Natural killer cell (primary cell): ENCODE measurements at regions of chr2 and their contacts with region 1.

Region 1: DNA sequence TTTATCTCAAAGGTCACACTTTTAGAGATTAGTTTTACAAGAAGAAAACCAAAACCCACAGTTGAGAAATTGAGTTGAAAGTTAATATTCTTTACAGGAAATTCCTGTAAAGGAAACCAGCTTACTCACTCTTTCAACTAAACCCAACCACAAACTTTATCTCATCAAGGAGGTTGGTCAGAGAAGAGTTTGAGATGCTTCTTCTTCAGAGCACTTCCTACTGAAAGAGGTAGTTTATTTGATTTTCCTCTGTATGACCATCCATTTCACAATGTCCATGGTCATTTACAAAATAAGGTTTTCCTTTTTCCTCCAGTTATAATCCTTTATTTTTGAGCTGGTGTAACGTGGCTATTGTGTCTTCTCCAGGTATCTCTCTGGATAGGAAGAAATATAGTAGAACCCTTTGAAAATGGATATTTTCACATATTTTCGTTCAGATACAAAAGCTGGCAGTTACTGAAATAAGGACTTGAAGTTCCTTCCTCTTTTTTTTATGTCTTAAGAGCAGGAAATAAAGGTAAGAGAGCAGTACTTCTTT is 4.5 kb upstream of the IL18RAP start:
- DNase-seq: peak in 1 of 2 donors; percentile 72
- ATAC-seq: peak; percentile 60 to 83 (median 77)
- H3K4me3 ChIP-seq: peak overlapping the region; percentile 71
- H3K4me3 Mint-ChIP-seq: peak overlapping the region; percentile 97
- H3K27ac ChIP-seq: peak overlapping the region; percentile 77
- H3K27ac Mint-ChIP-seq: peak overlapping the region in 1 of 2 donors; percentile 93
- H3K4me1 ChIP-seq: peaks cover 44% of the 10 kb centered on the region
- H3K4me1 Mint-ChIP-seq: peaks cover 82 to 88% of the 10 kb centered on the region in 2 donors
- H3K27me3 ChIP-seq: no peaks in the 10 kb centered on the region
- H3K27me3 Mint-ChIP-seq: no peaks in the 10 kb centered on the region
- CTCF ChIP-seq: no peak

Region 2: GRCh38 chr2:101328474-101329007 is 1090.0 kb before region 1 on chr2:
- intact Hi-C with region 1: no loop called
- DNase-seq: peak in 1 of 2 donors; percentile 75
- ATAC-seq: peak; percentile 59 to 87 (median 71)
- H3K4me3 ChIP-seq: no peak overlapping the region
- H3K4me3 Mint-ChIP-seq: no peak overlapping the region
- H3K27ac ChIP-seq: peak overlapping the region; percentile 83
- H3K27ac Mint-ChIP-seq: no peak overlapping the region
- H3K4me1 ChIP-seq: peaks cover 40% of the 10 kb centered on the region
- H3K4me1 Mint-ChIP-seq: peaks cover 0 to 5% of the 10 kb centered on the region in 2 donors
- H3K27me3 ChIP-seq: no peaks in the 10 kb centered on the region
- H3K27me3 Mint-ChIP-seq: no peaks in the 10 kb centered on the region
- CTCF ChIP-seq: no peak

Region 3: GRCh38 chr2:101983928-101984327 is 434.6 kb before region 1 on chr2:
- intact Hi-C with region 1: loop called (anchors 5 kb)
- DNase-seq: no peak
- ATAC-seq: no peak
- H3K4me3 ChIP-seq: no peak overlapping the region
- H3K4me3 Mint-ChIP-seq: no peak overlapping the region
- H3K27ac ChIP-seq: no peak overlapping the region
- H3K27ac Mint-ChIP-seq: no peak overlapping the region
- H3K4me1 ChIP-seq: peaks cover 70% of the 10 kb centered on the region
- H3K4me1 Mint-ChIP-seq: peaks cover 56 to 62% of the 10 kb centered on the region in 2 donors
- H3K27me3 ChIP-seq: peaks cover 21% of the 10 kb centered on the region
- H3K27me3 Mint-ChIP-seq: peaks cover 32 to 55% of the 10 kb centered on the region in 2 donors
- CTCF ChIP-seq: no peak

Region 4: GRCh38 chr2:102258386-102259074 is 160.0 kb before region 1 on chr2:
- intact Hi-C with region 1: loop called (anchors 2 kb)
- DNase-seq: peak in 1 of 2 donors; percentile 36
- ATAC-seq: peak; percentile 66 to 73 (median 70)
- H3K4me3 ChIP-seq: no peak overlapping the region
- H3K4me3 Mint-ChIP-seq: peak overlapping the region; percentile 78
- H3K27ac ChIP-seq: peak overlapping the region; percentile 31
- H3K27ac Mint-ChIP-seq: peak overlapping the region; percentile 84 to 92
- H3K4me1 ChIP-seq: peaks cover 53% of the 10 kb centered on the region
- H3K4me1 Mint-ChIP-seq: peaks cover 37 to 46% of the 10 kb centered on the region in 2 donors
- H3K27me3 ChIP-seq: no peaks in the 10 kb centered on the region
- H3K27me3 Mint-ChIP-seq: no peaks in the 10 kb centered on the region
- CTCF ChIP-seq: no peak

Region 5: GRCh38 chr2:102366406-102367112 is 51.9 kb before region 1 on chr2:
- intact Hi-C with region 1: loop called (anchors 1 kb)
- DNase-seq: peak in 1 of 2 donors; percentile 60
- ATAC-seq: peak; percentile 25 to 53 (median 45)
- H3K4me3 ChIP-seq: peak overlapping the region; percentile 26
- H3K4me3 Mint-ChIP-seq: peak overlapping the region; percentile 88
- H3K27ac ChIP-seq: peak overlapping the region; percentile 80
- H3K27ac Mint-ChIP-seq: peak overlapping the region; percentile 90 to 95
- H3K4me1 ChIP-seq: peaks cover 35% of the 10 kb centered on the region
- H3K4me1 Mint-ChIP-seq: peaks cover 87% of the 10 kb centered on the region in 2 donors
- H3K27me3 ChIP-seq: no peaks in the 10 kb centered on the region
- H3K27me3 Mint-ChIP-seq: no peaks in the 10 kb centered on the region
- CTCF ChIP-seq: no peak

Region 6: GRCh38 chr2:102401456-102401855 is 17.0 kb before region 1 on chr2:
- intact Hi-C with region 1: no loop called
- DNase-seq: no peak
- ATAC-seq: peak in 1 of 3 donors; percentile 24
- H3K4me3 ChIP-seq: no peak overlapping the region
- H3K4me3 Mint-ChIP-seq: no peak overlapping the region
- H3K27ac ChIP-seq: no peak overlapping the region
- H3K27ac Mint-ChIP-seq: peak overlapping the region; percentile 15 to 69
- H3K4me1 ChIP-seq: peaks cover 22% of the 10 kb centered on the region
- H3K4me1 Mint-ChIP-seq: peaks cover 32 to 41% of the 10 kb centered on the region in 2 donors
- H3K27me3 ChIP-seq: no peaks in the 10 kb centered on the region
- H3K27me3 Mint-ChIP-seq: no peaks in the 10 kb centered on the region
- CTCF ChIP-seq: no peak

Region 7: GRCh38 chr2:102434655-102435381 is 16.3 kb after region 1 on chr2:
- intact Hi-C with region 1: loop called (anchors 2 kb)
- DNase-seq: no peak
- ATAC-seq: peak; percentile 50 to 75 (median 68)
- H3K4me3 ChIP-seq: no peak overlapping the region
- H3K4me3 Mint-ChIP-seq: peak overlapping the region; percentile 43
- H3K27ac ChIP-seq: peak overlapping the region; percentile 3
- H3K27ac Mint-ChIP-seq: peak overlapping the region in 1 of 2 donors; percentile 71
- H3K4me1 ChIP-seq: peaks cover 51% of the 10 kb centered on the region
- H3K4me1 Mint-ChIP-seq: peaks cover 58 to 61% of the 10 kb centered on the region in 2 donors
- H3K27me3 ChIP-seq: no peaks in the 10 kb centered on the region
- H3K27me3 Mint-ChIP-seq: no peaks in the 10 kb centered on the region
- CTCF ChIP-seq: no peak

Region 8: GRCh38 chr2:102551329-102552096 is 133.0 kb after region 1 on chr2:
- intact Hi-C with region 1: no loop called
- DNase-seq: no peak
- ATAC-seq: no peak
- H3K4me3 ChIP-seq: no peak overlapping the region
- H3K4me3 Mint-ChIP-seq: no peak overlapping the region
- H3K27ac ChIP-seq: no peak overlapping the region
- H3K27ac Mint-ChIP-seq: no peak overlapping the region
- H3K4me1 ChIP-seq: no peaks in the 10 kb centered on the region
- H3K4me1 Mint-ChIP-seq: no peaks in the 10 kb centered on the region
- H3K27me3 ChIP-seq: no peaks in the 10 kb centered on the region
- H3K27me3 Mint-ChIP-seq: peaks cover 0 to 4% of the 10 kb centered on the region in 2 donors
- CTCF ChIP-seq: no peak

Region 9: GRCh38 chr2:102850888-102851287 is 432.4 kb after region 1 on chr2:
- intact Hi-C with region 1: no loop called
- DNase-seq: no peak
- ATAC-seq: no peak
- H3K4me3 ChIP-seq: no peak overlapping the region
- H3K4me3 Mint-ChIP-seq: no peak overlapping the region
- H3K27ac ChIP-seq: no peak overlapping the region
- H3K27ac Mint-ChIP-seq: no peak overlapping the region
- H3K4me1 ChIP-seq: no peaks in the 10 kb centered on the region
- H3K4me1 Mint-ChIP-seq: no peaks in the 10 kb centered on the region
- H3K27me3 ChIP-seq: no peaks in the 10 kb centered on the region
- H3K27me3 Mint-ChIP-seq: peaks cover 17 to 37% of the 10 kb centered on the region in 2 donors
- CTCF ChIP-seq: no peak